Calu3 (cell line): ENCODE measurements at regions of chr9 and their contacts with region 1.

Region 1: DNA sequence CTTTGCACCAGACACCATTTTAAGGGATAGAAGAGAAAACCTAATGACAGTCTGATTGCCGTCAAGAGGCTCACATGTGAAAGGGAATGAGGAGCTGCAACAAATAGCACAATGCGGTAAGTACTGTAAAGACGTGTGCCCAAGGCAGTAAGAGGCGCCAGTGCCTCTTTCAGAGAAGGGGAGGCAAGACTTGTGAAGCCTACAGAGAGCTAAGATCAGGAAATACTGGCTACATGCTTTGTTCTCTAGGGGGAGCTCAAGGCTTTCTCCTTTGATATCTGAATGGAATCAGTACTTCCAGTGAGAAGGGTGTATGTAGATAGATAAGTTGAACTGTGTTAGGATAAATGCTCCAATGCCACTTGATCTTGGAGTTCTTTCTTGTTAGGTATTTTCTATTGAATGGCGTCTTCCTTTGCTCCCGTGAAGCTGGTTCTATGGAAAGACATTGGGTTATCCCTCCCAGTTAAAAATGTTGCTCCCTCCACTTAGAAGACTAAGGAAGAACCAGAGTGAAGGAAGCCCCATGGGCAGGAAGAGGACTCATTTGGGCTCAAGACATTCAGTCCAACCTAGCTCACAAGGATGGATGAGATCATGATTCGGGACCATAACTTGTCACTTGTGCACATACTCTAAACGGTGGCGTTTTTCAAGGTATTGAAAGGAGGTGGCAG is 23.5 kb upstream of the ALDOB start:
- DNase-seq: peak; percentile 47
- H3K4me3 Mint-ChIP-seq: no peak overlapping the region
- H3K27ac Mint-ChIP-seq: peak overlapping the region; percentile 22
- H3K4me1 Mint-ChIP-seq: peaks cover 27% of the 10 kb centered on the region
- H3K27me3 Mint-ChIP-seq: no peaks in the 10 kb centered on the region
- CTCF ChIP-seq: peak; percentile 38

Region 2: GRCh38 chr9:101530077-101530711 is 71.1 kb after region 1 on chr9:
- CTCF ChIA-PET with region 1: interaction called, 22 read pairs
- intact Hi-C with region 1: loop called (anchors 1 kb)
- DNase-seq: peak; percentile 69
- H3K4me3 Mint-ChIP-seq: no peak overlapping the region
- H3K27ac Mint-ChIP-seq: no peak overlapping the region
- H3K4me1 Mint-ChIP-seq: no peaks in the 10 kb centered on the region
- H3K27me3 Mint-ChIP-seq: no peaks in the 10 kb centered on the region
- CTCF ChIP-seq: peak; percentile 66

Region 3: GRCh38 chr9:101566904-101567724 is 108.0 kb after region 1 on chr9:
- CTCF ChIA-PET with region 1: interaction called, 11 read pairs
- intact Hi-C with region 1: no loop called
- DNase-seq: peak; percentile 28
- H3K4me3 Mint-ChIP-seq: no peak overlapping the region
- H3K27ac Mint-ChIP-seq: no peak overlapping the region
- H3K4me1 Mint-ChIP-seq: no peaks in the 10 kb centered on the region
- H3K27me3 Mint-ChIP-seq: no peaks in the 10 kb centered on the region
- CTCF ChIP-seq: peak; percentile 17